ENCODE measurements at regions of chr5 and their contacts with region 1.

Region 1: GRCh38 chr5:57037355-57037754 is 85.4 kb upstream of the MIER3 start:
- DNase-seq: no peak
- ATAC-seq: no peak
- H3K4me3 ChIP-seq: no peak overlapping the region
- H3K27ac ChIP-seq: no peak overlapping the region
- H3K4me1 ChIP-seq: no peaks in the 10 kb centered on the region
- H3K27me3 ChIP-seq: peaks cover 5% of the 10 kb centered on the region
- CTCF ChIP-seq: no peak
- POLR2A ChIP-seq: no peak
- RAD21 ChIP-seq: no peak

Region 2: DNA sequence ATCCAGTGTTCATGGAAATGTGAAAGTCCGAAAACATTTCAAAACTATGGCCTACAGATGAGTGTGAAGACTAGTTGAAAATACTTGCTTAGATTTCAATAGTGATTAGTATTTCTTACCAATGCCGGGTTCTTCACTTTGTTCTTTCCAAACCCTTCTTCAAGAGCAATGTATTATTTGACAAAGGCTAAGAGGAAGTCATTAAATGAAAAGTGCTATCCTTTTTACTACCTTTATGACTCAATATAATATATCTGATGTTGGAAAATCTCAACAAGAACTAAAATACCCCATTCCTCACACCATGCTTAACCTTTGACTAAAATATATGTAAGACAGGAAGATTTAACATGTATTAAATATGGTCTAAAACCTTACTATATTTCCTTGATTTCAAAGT is 78.8 kb before region 1 on chr5:
- CTCF ChIA-PET with region 1: no interaction called
- POLR2A ChIA-PET with region 1: no interaction called
- dilution Hi-C with region 1: no loop called
- in situ Hi-C with region 1: no loop called
- intact Hi-C with region 1: loop called (anchors 5 kb)
- DNase-seq: no peak
- ATAC-seq: no peak
- H3K4me3 ChIP-seq: no peak overlapping the region
- H3K27ac ChIP-seq: no peak overlapping the region
- H3K4me1 ChIP-seq: no peaks in the 10 kb centered on the region
- H3K27me3 ChIP-seq: peaks cover 43% of the 10 kb centered on the region
- CTCF ChIP-seq: no peak
- POLR2A ChIP-seq: no peak
- RAD21 ChIP-seq: no peak

Region 3: GRCh38 chr5:57221049-57221568 is 183.8 kb after region 1 on chr5:
- CTCF ChIA-PET with region 1: no interaction called
- POLR2A ChIA-PET with region 1: no interaction called
- dilution Hi-C with region 1: no loop called
- in situ Hi-C with region 1: no loop called
- intact Hi-C with region 1: no loop called
- DNase-seq: peak; percentile 65
- ATAC-seq: peak; percentile 86
- H3K4me3 ChIP-seq: no peak overlapping the region
- H3K27ac ChIP-seq: no peak overlapping the region
- H3K4me1 ChIP-seq: peaks cover 8% of the 10 kb centered on the region
- H3K27me3 ChIP-seq: no peaks in the 10 kb centered on the region
- CTCF ChIP-seq: peak; percentile 93
- POLR2A ChIP-seq: no peak
- RAD21 ChIP-seq: peak; percentile 91

Measured in IMR-90 (cell line).